ENCODE measurements at regions of chr19 and their contacts with region 1.

Region 1: DNA sequence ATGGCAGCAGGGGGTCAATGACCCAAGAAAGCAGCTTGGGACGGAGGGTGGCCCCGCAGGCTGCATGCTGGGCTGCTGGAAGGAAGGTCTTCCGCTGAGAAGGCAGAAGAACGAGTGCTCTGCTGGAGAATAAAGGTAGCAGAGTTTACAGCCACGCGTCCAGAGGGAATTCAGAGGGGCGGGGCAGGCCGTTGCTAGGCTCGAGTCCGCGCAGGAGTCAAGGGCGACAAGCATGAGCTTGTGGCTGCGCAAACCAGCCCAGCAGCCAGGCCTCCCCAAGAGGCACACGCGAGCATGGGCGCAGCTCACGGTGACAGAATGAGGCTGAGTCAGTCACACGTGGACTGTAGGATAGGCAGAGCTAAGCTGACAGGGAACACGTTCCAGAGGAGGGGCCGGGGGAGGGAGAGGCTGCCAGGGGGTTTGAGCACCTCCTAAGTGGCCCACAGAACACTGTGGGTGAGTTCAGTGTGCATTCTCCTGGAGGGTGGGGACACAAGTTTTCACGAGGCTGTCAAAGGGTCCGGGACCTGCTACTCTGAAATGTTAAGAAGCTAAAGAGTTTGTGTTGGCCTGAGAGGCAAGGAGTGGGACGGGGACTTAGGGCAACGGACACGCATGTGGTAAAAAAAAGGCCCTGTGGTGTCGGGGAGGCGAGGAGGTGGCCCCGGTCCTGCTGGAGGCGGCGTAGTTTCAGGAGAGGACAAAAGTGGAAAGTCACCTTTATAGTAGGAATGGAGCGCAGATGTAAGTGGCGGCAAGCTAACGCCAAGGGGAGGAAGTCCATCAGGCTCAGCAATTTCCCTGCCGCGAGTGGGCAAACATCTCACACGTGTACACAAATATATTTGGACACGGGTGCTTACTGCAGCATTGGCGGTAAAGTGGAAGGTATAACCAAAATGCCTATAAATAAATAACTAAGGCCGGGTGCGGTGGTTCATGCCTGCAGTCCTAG is 17.7 kb downstream of the RFX2 start:
- DNase-seq: peak; percentile 87
- ATAC-seq: peak; percentile 88 to 92

Region 2: GRCh38 chr19:6056801-6057650 is 35.6 kb before region 1 on chr19:
- intact Hi-C with region 1: loop called in 1 of 2 experiments (anchors 2 kb)
- DNase-seq: peak; percentile 82
- ATAC-seq: peak; percentile 75 to 85

Region 3: DNA sequence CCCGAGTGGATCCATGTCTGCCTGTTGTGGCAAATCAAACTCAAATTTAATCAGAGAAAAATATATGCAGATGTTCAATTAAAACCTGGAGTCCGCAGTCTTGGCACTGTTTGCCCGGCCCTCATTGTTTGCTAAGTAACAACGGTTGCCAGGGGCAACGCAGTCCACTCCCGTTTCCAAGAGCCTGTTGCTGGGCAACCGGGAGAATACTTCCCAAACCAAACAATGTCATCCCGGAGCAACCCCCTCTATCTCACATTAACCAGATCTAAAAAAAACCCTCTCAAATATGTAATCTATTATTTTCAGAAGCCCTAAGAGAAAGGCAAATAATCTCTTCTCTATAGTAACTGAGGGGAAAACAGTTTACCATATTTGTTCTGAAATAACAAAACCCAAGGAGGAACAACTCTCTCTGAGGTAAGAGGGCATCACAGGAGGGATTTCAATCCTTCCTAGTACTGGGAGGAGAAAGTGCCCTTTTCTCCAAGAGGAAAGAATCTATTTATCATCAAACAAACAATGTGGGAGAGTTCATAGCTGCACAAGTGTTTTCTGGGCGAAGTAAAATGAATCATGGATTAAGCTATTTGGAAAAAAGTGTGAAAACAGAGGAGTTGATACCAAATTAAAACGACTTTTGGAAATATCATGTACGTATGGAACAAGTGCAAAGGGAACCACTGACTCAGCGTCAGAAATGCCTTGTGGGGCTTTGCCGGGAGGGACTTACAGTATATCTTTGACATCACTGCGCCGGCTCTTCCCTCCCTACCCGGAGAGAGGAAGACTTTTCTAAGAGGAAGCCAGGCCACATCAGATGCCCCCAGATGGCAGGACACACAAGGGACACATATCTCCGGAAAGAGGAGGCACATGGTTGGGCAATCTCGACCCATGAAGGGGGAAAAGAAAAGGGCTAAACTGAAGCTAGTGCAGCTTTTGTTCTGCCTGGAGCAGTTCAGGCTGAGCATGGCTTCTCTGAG is 25.7 kb before region 1 on chr19:
- intact Hi-C with region 1: loop called in 1 of 2 experiments (anchors 2 kb)
- DNase-seq: peak; percentile 99
- ATAC-seq: peak; percentile 77 to 85

Region 4: GRCh38 chr19:6185835-6186834 is 93.5 kb after region 1 on chr19:
- intact Hi-C with region 1: no loop called
- DNase-seq: no peak
- ATAC-seq: no peak

Region 5: GRCh38 chr19:6318772-6319171 is 226.2 kb after region 1 on chr19:
- intact Hi-C with region 1: no loop called
- DNase-seq: no peak
- ATAC-seq: no peak

Measured in left cardiac atrium (tissue), 4 donors.